Activated naive CD4-positive, alpha-beta T cell treated with anti-CD3 and anti-CD28 coated beads for 36 hours (primary cell): ENCODE measurements at regions of chr22 and their contacts with region 1.

Region 1: DNA sequence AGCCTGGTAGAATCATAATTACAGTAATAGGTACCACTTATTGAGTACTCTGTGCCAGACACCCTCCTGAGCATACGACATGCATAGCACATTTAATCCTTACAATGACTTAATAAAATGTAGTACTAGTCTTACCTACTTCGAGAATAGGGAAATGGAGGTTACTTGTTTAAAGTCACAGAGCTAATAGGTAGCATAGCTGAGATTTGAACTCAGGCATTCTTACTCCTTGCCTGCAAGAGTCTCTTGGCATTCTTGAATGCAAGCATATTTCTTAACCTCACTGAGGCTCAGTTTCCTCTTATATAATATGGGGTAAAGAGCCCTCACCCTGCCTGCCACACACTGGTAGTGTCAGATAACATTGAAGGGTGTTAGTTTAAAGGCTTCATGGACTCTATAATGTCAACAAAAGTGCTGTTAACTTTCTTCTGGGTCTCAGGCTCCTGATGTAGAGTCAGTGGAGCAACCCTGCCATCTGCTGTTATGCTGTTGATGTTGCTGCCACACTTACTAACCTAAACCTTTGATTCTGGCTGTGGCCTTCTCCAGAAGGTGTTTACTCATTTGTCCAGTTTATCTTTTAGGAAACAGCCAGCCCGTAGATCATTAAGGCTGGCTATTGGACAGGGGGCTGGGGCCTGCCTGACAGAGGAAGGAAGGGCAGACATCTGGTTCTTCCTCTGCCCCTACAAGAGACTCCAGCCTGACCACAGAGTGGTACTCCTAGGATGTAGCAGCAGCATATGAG is 18.9 kb downstream of the LIMK2 start:
- DNase-seq: peak; percentile 60
- H3K4me3 Mint-ChIP-seq: no peak overlapping the region
- H3K27ac Mint-ChIP-seq: no peak overlapping the region
- H3K4me1 Mint-ChIP-seq: peaks cover 28% of the 10 kb centered on the region
- H3K27me3 Mint-ChIP-seq: no peaks in the 10 kb centered on the region

Region 2: GRCh38 chr22:30947816-30948454 is 283.1 kb before region 1 on chr22:
- CTCF ChIA-PET with region 1: no interaction called
- intact Hi-C with region 1: loop called (anchors 5 kb)
- DNase-seq: no peak
- H3K4me3 Mint-ChIP-seq: no peak overlapping the region
- H3K27ac Mint-ChIP-seq: no peak overlapping the region
- H3K4me1 Mint-ChIP-seq: peaks cover 60% of the 10 kb centered on the region
- H3K27me3 Mint-ChIP-seq: no peaks in the 10 kb centered on the region

Region 3: GRCh38 chr22:31474743-31475142 is 243.7 kb after region 1 on chr22:
- CTCF ChIA-PET with region 1: no interaction called
- intact Hi-C with region 1: no loop called
- DNase-seq: no peak
- H3K4me3 Mint-ChIP-seq: no peak overlapping the region
- H3K27ac Mint-ChIP-seq: no peak overlapping the region
- H3K4me1 Mint-ChIP-seq: peaks cover 20% of the 10 kb centered on the region
- H3K27me3 Mint-ChIP-seq: no peaks in the 10 kb centered on the region